Activated CD4-positive, alpha-beta memory T cell treated with anti-CD3 and anti-CD28 coated beads for 36 hours (primary cell): ENCODE measurements at regions of chr3 and their contacts with region 1.

Region 1: GRCh38 chr3:124688581-124689454 is 41.4 kb upstream of the UMPS start:
- DNase-seq: peak; percentile 83
- H3K4me3 Mint-ChIP-seq: no peak overlapping the region
- H3K27ac Mint-ChIP-seq: no peak overlapping the region
- H3K4me1 Mint-ChIP-seq: peaks cover 10% of the 10 kb centered on the region
- H3K27me3 Mint-ChIP-seq: peaks cover 11% of the 10 kb centered on the region

Region 2: GRCh38 chr3:124559881-124560574 is 128.8 kb before region 1 on chr3:
- CTCF ChIA-PET with region 1: interaction called, 258 read pairs
- POLR2A ChIA-PET with region 1: no interaction called
- intact Hi-C with region 1: loop called (anchors 1 kb)
- DNase-seq: peak; percentile 74
- H3K4me3 Mint-ChIP-seq: no peak overlapping the region
- H3K27ac Mint-ChIP-seq: no peak overlapping the region
- H3K4me1 Mint-ChIP-seq: no peaks in the 10 kb centered on the region
- H3K27me3 Mint-ChIP-seq: peaks cover 35% of the 10 kb centered on the region

Region 3: GRCh38 chr3:124569761-124570160 is 119.1 kb before region 1 on chr3:
- CTCF ChIA-PET with region 1: interaction called, 258 read pairs
- POLR2A ChIA-PET with region 1: no interaction called
- intact Hi-C with region 1: loop called (anchors 1 kb)
- DNase-seq: no peak
- H3K4me3 Mint-ChIP-seq: no peak overlapping the region
- H3K27ac Mint-ChIP-seq: no peak overlapping the region
- H3K4me1 Mint-ChIP-seq: no peaks in the 10 kb centered on the region
- H3K27me3 Mint-ChIP-seq: no peaks in the 10 kb centered on the region

Region 4: DNA sequence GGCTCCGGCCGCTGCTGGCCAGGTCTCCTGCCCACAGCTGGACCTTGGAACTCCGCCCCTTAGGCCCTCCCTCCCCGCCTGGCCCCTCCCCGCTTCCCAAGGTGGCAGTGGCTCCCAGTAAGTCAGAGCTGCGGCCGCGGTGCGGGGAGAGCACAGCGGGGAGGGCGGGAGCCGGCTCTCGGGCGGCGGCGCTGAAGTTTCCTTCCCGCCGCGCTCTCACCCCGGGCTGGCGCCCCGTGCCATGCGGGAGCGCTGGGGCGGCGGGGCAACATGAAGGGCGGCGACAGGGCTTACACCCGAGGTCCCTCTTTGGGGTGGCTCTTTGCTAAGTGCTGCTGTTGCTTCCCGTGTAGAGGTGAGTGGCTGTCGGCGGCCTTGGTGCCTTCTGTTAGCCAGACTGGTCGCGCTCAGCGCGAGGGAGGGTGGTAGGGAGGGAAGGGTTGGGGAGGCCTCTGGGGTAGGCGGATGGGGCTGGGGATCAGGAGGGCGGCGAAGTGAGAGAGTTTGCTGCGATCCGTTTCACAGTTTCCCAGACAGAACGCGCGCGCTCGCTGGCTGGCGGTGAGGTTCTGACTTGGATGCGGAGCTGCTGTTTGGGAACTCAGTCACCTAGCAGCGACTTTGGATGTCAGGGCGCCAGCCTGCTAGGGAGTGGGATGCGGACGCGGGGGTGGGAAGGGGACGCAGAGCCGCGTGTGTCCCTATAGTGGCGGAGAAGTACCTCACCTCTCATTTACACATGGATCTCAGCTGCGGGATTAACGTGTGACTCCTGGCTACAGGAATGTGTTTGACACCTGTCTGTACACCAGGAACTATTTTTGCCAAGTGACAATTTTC is 104.0 kb before region 1 on chr3:
- CTCF ChIA-PET with region 1: interaction called, 17 read pairs
- POLR2A ChIA-PET with region 1: no interaction called
- intact Hi-C with region 1: loop called (anchors 5 kb)
- DNase-seq: peak; percentile 54
- H3K4me3 Mint-ChIP-seq: peak overlapping the region; percentile 86
- H3K27ac Mint-ChIP-seq: peak overlapping the region; percentile 47
- H3K4me1 Mint-ChIP-seq: peaks cover 46% of the 10 kb centered on the region
- H3K27me3 Mint-ChIP-seq: peaks cover 15% of the 10 kb centered on the region

Region 5: DNA sequence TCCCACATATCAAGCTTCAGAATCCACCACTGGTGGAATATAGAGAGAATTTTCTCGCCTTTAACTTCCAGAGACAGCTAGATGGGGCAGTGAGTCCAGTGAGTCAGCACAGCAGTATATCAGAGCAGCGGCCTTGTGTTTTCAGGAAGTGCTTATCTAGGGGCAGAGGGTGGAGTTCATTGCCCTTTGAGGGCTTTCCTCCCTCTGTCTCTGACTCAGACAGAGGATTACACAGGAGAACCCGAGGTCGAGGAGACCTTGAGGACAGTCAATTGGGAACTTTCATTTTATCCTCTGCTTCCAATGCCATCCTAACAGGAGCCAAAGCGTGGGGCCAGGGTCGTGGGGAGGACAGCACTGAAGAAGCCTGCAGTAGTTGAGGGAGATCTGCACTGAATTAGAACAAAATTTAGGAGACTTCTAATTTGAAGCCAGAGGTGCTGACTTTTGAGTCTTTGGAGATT is 68.2 kb before region 1 on chr3:
- CTCF ChIA-PET with region 1: interaction called, 14 read pairs
- POLR2A ChIA-PET with region 1: no interaction called
- intact Hi-C with region 1: loop called (anchors 1 kb)
- DNase-seq: peak; percentile 62
- H3K4me3 Mint-ChIP-seq: peak overlapping the region; percentile 6
- H3K27ac Mint-ChIP-seq: peak overlapping the region; percentile 24
- H3K4me1 Mint-ChIP-seq: peaks cover 34% of the 10 kb centered on the region
- H3K27me3 Mint-ChIP-seq: no peaks in the 10 kb centered on the region

Region 6: DNA sequence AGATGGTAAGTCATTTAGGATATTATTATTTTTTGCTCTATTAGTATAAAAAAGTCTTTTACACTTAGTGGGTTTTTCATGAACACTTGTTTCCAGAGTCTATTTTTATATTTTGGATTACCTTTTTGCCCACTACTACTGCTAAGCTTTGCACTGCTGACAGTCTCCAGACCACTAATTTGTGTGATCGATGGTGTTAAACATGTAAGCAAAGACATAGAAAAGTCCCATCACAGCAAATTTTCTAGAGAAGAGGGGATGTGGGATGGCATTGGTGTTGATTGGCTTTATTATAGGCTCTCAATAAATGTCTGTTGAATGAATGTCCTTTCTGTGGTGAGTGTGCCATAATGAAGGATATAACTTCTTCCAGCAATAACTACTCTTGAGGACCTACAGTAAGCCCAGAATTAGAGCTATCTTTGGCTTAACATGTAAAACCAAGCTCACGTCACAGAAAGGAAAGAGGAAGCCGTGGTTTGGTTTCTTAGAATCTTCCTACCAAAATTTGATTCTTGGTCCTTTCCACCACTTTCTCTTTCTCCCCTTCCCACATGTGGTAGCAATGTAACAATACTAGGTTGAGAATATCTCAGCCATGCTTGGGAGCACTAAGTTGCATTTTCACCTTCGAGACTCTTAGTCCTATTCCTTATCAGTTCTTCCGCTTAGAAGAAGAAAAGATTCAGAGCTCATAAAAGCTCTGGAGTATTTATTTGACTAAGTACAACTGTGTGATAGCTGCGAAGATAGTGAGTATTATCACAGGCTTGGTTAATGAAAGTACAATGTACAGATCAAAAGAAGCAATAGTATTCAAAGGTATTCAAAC is 49.2 kb before region 1 on chr3:
- CTCF ChIA-PET with region 1: interaction called, 14 read pairs
- POLR2A ChIA-PET with region 1: no interaction called
- intact Hi-C with region 1: loop called (anchors 5 kb)
- DNase-seq: peak; percentile 12
- H3K4me3 Mint-ChIP-seq: peak overlapping the region; percentile 28
- H3K27ac Mint-ChIP-seq: peak overlapping the region; percentile 67
- H3K4me1 Mint-ChIP-seq: peaks cover 27% of the 10 kb centered on the region
- H3K27me3 Mint-ChIP-seq: peaks cover 5% of the 10 kb centered on the region

Region 7: DNA sequence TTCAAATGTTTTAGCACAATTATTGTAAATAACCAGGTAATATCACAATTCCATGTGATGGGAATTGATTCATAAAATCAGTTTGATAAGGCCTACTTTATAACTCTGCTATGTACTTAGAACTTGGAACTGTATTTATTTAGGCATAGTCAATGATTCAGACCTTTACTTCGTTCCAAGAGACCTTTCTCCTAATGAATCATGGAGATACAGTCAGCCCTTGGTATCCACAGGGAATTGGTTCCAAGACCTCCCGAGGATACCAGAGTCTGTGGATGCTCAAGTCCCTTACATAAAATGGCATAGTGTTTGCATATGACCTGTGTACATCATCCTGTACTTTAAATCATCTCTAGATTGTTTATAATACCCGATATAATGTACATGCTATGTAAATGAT is 19.3 kb before region 1 on chr3:
- CTCF ChIA-PET with region 1: interaction called, 11 read pairs
- POLR2A ChIA-PET with region 1: no interaction called
- intact Hi-C with region 1: no loop called
- DNase-seq: no peak
- H3K4me3 Mint-ChIP-seq: no peak overlapping the region
- H3K27ac Mint-ChIP-seq: no peak overlapping the region
- H3K4me1 Mint-ChIP-seq: peaks cover 12% of the 10 kb centered on the region
- H3K27me3 Mint-ChIP-seq: no peaks in the 10 kb centered on the region